PC-9 (cell line): ENCODE measurements at regions of chr20 and their contacts with region 1.

Region 1: GRCh38 chr20:10558635-10559187 is 115.1 kb downstream of the JAG1 start:
- DNase-seq: peak; percentile 35 to 70
- H3K4me3 ChIP-seq: peak overlapping the region; percentile 8; the same call in 1 of the 2 replicates
- H3K27ac ChIP-seq: peak overlapping the region; percentile 87
- H3K4me1 ChIP-seq: peaks cover 48% of the 10 kb centered on the region
- H3K27me3 ChIP-seq: no peaks in the 10 kb centered on the region
- CTCF ChIP-seq: no peak

Region 2: DNA sequence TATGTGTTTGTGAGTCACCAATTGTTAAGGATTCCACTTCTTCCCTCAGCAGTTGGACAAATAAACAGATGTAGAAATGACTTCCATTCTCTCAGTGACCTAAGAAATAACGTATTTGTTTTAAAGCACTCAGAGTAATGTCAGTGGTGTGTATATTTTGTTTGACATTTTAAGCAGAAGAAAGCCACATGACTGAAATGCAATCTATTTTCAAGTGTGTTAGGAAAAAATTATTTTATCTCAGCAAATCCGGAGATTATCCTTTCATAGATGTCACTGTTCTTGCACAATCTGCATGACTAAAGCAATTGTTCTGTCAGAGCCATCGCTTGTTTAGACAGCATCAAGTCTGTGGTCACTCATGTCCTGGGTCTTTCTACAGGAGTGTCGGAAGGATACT is 38.0 kb after region 1 on chr20:
- CTCF ChIA-PET with region 1: no interaction called
- POLR2A ChIA-PET with region 1: interaction called, 4 read pairs
- intact Hi-C with region 1: loop called (anchors 2 kb)
- DNase-seq: no peak
- H3K4me3 ChIP-seq: no peak overlapping the region
- H3K27ac ChIP-seq: no peak overlapping the region
- H3K4me1 ChIP-seq: peaks cover 38% of the 10 kb centered on the region
- H3K27me3 ChIP-seq: no peaks in the 10 kb centered on the region
- CTCF ChIP-seq: no peak

Region 3: GRCh38 chr20:10603971-10604864 is 45.5 kb after region 1 on chr20:
- CTCF ChIA-PET with region 1: no interaction called
- POLR2A ChIA-PET with region 1: interaction called, 4 read pairs
- intact Hi-C with region 1: loop called (anchors 2 kb)
- DNase-seq: peak; percentile 63 to 84
- H3K4me3 ChIP-seq: no peak overlapping the region
- H3K27ac ChIP-seq: peak overlapping the region; percentile 87
- H3K4me1 ChIP-seq: peaks cover 34% of the 10 kb centered on the region
- H3K27me3 ChIP-seq: no peaks in the 10 kb centered on the region
- CTCF ChIP-seq: no peak

Region 4: GRCh38 chr20:10636326-10636818 is 77.7 kb after region 1 on chr20:
- CTCF ChIA-PET with region 1: no interaction called
- POLR2A ChIA-PET with region 1: interaction called, 4 read pairs
- intact Hi-C with region 1: loop called (anchors 5 kb)
- DNase-seq: no peak
- H3K4me3 ChIP-seq: no peak overlapping the region
- H3K27ac ChIP-seq: no peak overlapping the region
- H3K4me1 ChIP-seq: no peaks in the 10 kb centered on the region
- H3K27me3 ChIP-seq: no peaks in the 10 kb centered on the region
- CTCF ChIP-seq: no peak

Region 5: GRCh38 chr20:10864076-10864918 is 305.6 kb after region 1 on chr20:
- CTCF ChIA-PET with region 1: no interaction called
- POLR2A ChIA-PET with region 1: interaction called, 5 read pairs
- intact Hi-C with region 1: loop called (anchors 5 kb)
- DNase-seq: peak; percentile 65 to 81
- H3K4me3 ChIP-seq: peak overlapping the region; percentile 10; the same call in 1 of the 2 replicates
- H3K27ac ChIP-seq: peak overlapping the region; percentile 75
- H3K4me1 ChIP-seq: peaks cover 42% of the 10 kb centered on the region
- H3K27me3 ChIP-seq: no peaks in the 10 kb centered on the region
- CTCF ChIP-seq: no peak

Region 6: GRCh38 chr20:10922941-10923340 is 364.2 kb after region 1 on chr20:
- CTCF ChIA-PET with region 1: no interaction called
- POLR2A ChIA-PET with region 1: no interaction called
- intact Hi-C with region 1: loop called (anchors 5 kb)
- DNase-seq: peak; percentile 59 to 82
- H3K4me3 ChIP-seq: no peak overlapping the region
- H3K27ac ChIP-seq: peak overlapping the region; percentile 50
- H3K4me1 ChIP-seq: peaks cover 48% of the 10 kb centered on the region
- H3K27me3 ChIP-seq: no peaks in the 10 kb centered on the region
- CTCF ChIP-seq: no peak

Region 7: GRCh38 chr20:11267131-11267761 is 708.5 kb after region 1 on chr20:
- CTCF ChIA-PET with region 1: no interaction called
- POLR2A ChIA-PET with region 1: no interaction called
- intact Hi-C with region 1: loop called (anchors 1 kb)
- DNase-seq: peak; percentile 62 to 84
- H3K4me3 ChIP-seq: peak overlapping the region; percentile 19; the same call in 1 of the 2 replicates
- H3K27ac ChIP-seq: peak overlapping the region; percentile 61
- H3K4me1 ChIP-seq: peaks cover 21% of the 10 kb centered on the region
- H3K27me3 ChIP-seq: no peaks in the 10 kb centered on the region
- CTCF ChIP-seq: no peak